Ovary (tissue), 10 donors: ENCODE measurements at regions of chr1 and their contacts with region 1.

Region 1: GRCh38 chr1:31739346-31739745 is 24.8 kb downstream of the ADGRB2 start:
- DNase-seq: no peak
- H3K4me3 ChIP-seq: no peak overlapping the region
- H3K27ac ChIP-seq: no peak overlapping the region
- H3K4me1 ChIP-seq: no peaks in the 10 kb centered on the region
- H3K27me3 ChIP-seq: no peaks in the 10 kb centered on the region
- CTCF ChIP-seq: no peak
- EP300 ChIP-seq: no peak
- POLR2A ChIP-seq: no peak

Region 2: DNA sequence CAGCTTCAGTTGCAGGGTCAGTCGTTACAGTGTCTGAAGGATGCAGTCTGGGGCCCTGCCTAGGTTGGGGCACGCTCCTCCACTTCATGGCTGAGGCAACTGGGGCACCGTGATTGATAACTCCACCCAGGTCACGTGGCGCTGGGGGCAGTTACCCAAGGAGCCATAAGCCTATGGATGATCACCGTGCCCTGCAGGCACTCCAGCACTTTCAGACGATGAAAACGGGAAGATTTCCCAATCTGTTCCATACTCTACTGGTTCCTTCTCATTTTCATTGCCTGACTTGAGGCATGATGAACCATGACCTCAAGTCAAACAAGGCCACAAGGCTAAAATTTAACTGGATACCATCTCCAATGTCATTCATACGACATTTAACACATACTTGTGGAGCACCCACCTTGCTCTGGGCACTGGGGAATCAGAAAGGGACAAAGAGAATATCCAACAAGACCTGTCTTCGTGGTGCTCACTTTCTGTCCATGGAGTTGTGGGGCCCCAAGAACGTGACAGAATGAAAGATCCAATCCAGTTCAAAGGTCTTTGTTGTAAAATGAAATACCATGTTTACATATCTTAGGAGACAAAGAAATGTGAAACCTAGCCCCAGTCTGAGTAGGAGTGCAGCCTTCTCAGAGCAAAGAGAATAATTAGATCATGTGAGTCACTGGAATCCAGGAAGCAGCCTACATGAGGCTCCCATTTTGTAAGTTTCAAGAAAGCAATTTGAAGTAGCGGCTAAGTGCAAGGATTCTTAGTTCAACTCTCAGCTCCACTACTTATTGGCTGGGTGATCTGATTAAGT is 115.9 kb after region 1 on chr1:
- intact Hi-C with region 1: loop called in 1 of 4 experiments (anchors 5 kb)
- DNase-seq: no peak
- H3K4me3 ChIP-seq: no peak overlapping the region
- H3K27ac ChIP-seq: no peak overlapping the region
- H3K4me1 ChIP-seq: no peaks in the 10 kb centered on the region
- H3K27me3 ChIP-seq: no peaks in the 10 kb centered on the region
- CTCF ChIP-seq: no peak
- EP300 ChIP-seq: no peak
- POLR2A ChIP-seq: no peak